ENCODE measurements at regions of chr1 and their contacts with region 1.

Region 1: GRCh38 chr1:84944767-84945486 is 51.9 kb upstream of the LPAR3 start:
- DNase-seq: peak; percentile 95
- H3K4me3 Mint-ChIP-seq: peak overlapping the region; percentile 67
- H3K27ac Mint-ChIP-seq: peak overlapping the region; percentile 69
- H3K4me1 Mint-ChIP-seq: peaks cover 7% of the 10 kb centered on the region
- H3K27me3 Mint-ChIP-seq: peaks cover 14% of the 10 kb centered on the region
- CTCF ChIP-seq: peak; percentile 74

Region 2: GRCh38 chr1:84959294-84959693 is 14.4 kb after region 1 on chr1:
- CTCF ChIA-PET with region 1: interaction called, 62 read pairs
- POLR2A ChIA-PET with region 1: interaction called, 4 read pairs
- intact Hi-C with region 1: no loop called
- DNase-seq: no peak
- H3K4me3 Mint-ChIP-seq: no peak overlapping the region
- H3K27ac Mint-ChIP-seq: no peak overlapping the region
- H3K4me1 Mint-ChIP-seq: peaks cover 6% of the 10 kb centered on the region
- H3K27me3 Mint-ChIP-seq: no peaks in the 10 kb centered on the region
- CTCF ChIP-seq: no peak

Region 3: DNA sequence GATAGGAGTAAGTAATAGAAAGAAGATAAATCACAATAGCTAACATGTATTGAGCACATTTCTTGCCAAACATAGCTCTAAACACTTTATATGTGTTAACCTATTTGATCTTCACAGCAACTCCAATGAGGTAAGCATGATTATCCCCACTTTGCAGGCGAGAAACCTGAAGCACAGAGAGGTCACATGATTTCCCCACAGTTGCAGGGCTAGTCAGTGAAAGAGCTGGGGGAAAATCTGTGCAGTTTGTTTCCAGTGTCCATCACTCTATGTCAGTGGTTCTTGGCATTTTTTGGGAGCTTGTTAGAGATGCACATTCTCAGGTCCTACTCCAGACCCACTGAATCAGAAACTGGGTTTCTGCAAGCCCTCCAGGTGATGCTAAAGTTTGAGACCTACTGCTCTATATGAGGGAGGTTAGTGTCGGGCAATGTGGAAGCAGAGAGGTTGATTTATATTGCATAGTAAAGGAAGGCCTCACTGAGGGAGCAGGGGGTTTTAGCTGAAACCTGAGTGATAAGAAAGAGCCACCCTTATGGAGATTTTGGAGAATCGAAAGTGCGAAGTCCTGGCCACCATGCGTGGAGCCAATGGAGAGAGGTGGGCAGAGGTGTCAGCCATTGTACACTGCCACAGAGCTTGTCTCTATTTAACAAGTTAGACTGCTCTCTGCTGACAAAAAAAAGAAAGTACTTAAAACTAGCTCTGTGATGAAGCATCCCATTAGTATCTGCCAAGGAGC is 82.5 kb after region 1 on chr1:
- CTCF ChIA-PET with region 1: interaction called, 20 read pairs
- POLR2A ChIA-PET with region 1: interaction called, 5 read pairs
- intact Hi-C with region 1: no loop called
- DNase-seq: peak; percentile 4
- H3K4me3 Mint-ChIP-seq: no peak overlapping the region
- H3K27ac Mint-ChIP-seq: no peak overlapping the region
- H3K4me1 Mint-ChIP-seq: no peaks in the 10 kb centered on the region
- H3K27me3 Mint-ChIP-seq: no peaks in the 10 kb centered on the region
- CTCF ChIP-seq: no peak

Region 4: DNA sequence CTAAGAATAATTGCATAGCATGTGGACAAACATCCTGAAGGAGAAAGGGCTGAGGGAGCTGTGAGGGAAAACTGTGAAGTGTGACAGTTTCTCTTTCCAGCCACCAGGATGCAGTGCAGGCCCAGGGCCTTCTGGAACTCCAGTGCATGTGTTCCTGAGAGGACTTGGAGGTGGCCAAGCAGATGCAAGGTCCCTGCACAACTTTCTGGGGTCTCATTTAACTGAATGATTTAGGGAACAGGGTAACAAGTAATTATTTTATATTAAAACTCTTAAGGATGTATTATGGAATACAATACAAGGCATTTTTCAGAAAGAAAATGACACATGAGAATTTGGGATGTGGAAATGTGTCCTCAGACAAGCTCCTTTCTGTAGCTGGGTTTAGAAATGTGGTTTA is 164.5 kb after region 1 on chr1:
- CTCF ChIA-PET with region 1: interaction called, 13 read pairs
- POLR2A ChIA-PET with region 1: interaction called, 4 read pairs
- intact Hi-C with region 1: loop called (anchors 2 kb)
- DNase-seq: peak; percentile 65
- H3K4me3 Mint-ChIP-seq: no peak overlapping the region
- H3K27ac Mint-ChIP-seq: no peak overlapping the region
- H3K4me1 Mint-ChIP-seq: no peaks in the 10 kb centered on the region
- H3K27me3 Mint-ChIP-seq: no peaks in the 10 kb centered on the region
- CTCF ChIP-seq: peak; percentile 93

Region 5: GRCh38 chr1:86018283-86018923 is 1073.5 kb after region 1 on chr1:
- CTCF ChIA-PET with region 1: no interaction called
- POLR2A ChIA-PET with region 1: no interaction called
- intact Hi-C with region 1: loop called (anchors 10 kb)
- DNase-seq: peak; percentile 56
- H3K4me3 Mint-ChIP-seq: no peak overlapping the region
- H3K27ac Mint-ChIP-seq: no peak overlapping the region
- H3K4me1 Mint-ChIP-seq: no peaks in the 10 kb centered on the region
- H3K27me3 Mint-ChIP-seq: peaks cover 9% of the 10 kb centered on the region
- CTCF ChIP-seq: peak; percentile 69

Measured in MCF 10A (cell line).